GM12878 (cell line): ENCODE measurements at regions of chr10 and their contacts with region 1.

Region 1: DNA sequence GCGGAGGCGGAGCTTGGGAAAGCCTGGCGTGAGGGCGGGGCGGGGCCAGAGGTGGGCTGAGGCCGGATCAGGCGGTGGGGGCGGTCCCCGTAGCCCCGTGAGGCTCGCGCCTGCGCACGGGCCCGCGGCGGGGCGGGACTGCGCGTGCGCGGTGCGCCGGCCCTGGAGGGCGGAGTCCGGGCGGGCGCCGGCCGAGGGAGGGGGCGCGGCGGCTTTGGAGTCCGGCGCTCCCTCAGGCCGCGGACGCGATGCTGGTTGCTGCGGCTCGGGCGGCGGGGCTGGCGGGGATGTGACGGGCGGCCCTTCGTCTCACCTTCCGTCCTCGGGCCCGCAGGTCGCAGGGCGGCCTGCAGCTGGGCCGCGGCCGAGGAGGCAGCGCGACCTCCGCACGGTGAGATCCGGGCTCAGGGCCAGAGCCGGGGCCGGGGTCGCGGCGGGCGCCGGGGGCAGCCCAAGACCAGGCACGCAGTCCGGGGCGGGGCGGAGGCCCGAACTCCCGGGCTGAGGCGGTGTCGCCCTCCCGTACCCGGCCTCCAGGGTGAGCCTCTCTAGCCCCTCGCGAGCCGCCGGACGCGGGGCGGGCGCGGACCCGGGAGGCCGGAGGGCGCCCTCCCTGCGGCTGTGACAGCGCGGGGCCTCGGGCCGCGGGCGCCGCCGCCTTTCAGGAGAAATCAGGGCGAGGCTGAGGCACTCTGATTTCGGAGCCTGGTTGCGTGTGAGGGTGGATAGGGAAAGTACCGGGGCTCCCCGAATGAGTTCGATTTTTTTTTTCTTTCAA is at the start of gene CCSER2:
- DNase-seq: no peak
- ATAC-seq: peak; percentile 74
- H3K4me3 ChIP-seq: peak within 1 kb of the TSS; percentile 75
- H3K27ac ChIP-seq: peak within 1 kb of the TSS; percentile 69
- H3K4me1 ChIP-seq: peaks cover 14% of the 10 kb centered on the region
- H3K27me3 ChIP-seq: no peaks in the 10 kb centered on the region; a peak in 1 of 4 replicates
- CTCF ChIP-seq: no peak
- EP300 ChIP-seq: no peak
- POLR2A ChIP-seq: peak; percentile 87
- RAD21 ChIP-seq: no peak
- polyA plus RNA-seq, gene CCSER2: 4.7 to 6.8 TPM

Region 2: GRCh38 chr10:84139126-84140035 is 189.2 kb before region 1 on chr10 and contains the start of gene GHITM:
- CTCF ChIA-PET with region 1: no interaction called
- POLR2A ChIA-PET with region 1: no interaction called
- RAD21 ChIA-PET with region 1: no interaction called
- SMC1A ChIA-PET with region 1: no interaction called
- in situ Hi-C with region 1: loop called (anchors 5 kb)
- intact Hi-C with region 1: no loop called
- DNase-seq: peak; percentile 92
- ATAC-seq: peak; percentile 98
- H3K4me3 ChIP-seq: peak within 1 kb of the TSS; percentile 84
- H3K27ac ChIP-seq: peak within 1 kb of the TSS; percentile 88
- H3K4me1 ChIP-seq: no peaks in the 10 kb centered on the region
- H3K27me3 ChIP-seq: no peaks in the 10 kb centered on the region
- CTCF ChIP-seq: peak; percentile 21 to 39 (median 29); a peak in 4 of 6 replicates
- EP300 ChIP-seq: peak; percentile 19 to 34; a peak in 1 of 4 replicates
- POLR2A ChIP-seq: peak; percentile 93
- RAD21 ChIP-seq: no peak
- polyA plus RNA-seq, gene GHITM: 366 to 501 TPM

Region 3: DNA sequence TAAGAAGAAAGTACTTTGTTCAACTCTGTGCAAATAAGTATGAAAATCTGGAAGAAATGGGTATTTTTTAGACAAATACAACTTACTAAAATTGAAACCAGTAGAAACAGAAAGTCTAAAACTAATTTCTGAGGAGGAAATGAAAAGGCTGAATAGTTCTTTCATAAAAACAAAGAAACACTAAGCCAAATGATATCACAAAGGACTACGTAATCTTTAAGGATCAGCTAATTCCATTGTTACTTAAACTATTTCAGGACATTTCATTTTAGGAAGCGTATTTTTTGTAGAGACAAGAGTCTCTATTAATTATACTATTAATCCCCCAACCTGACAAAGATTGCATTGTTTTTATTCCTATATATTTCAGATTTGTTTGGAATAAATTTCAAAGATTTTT is 11.4 kb before region 1 on chr10:
- CTCF ChIA-PET with region 1: interaction called, 4 read pairs
- POLR2A ChIA-PET with region 1: interaction called, 4 read pairs
- RAD21 ChIA-PET with region 1: interaction called, 10 read pairs
- SMC1A ChIA-PET with region 1: interaction called, 14 read pairs
- in situ Hi-C with region 1: no loop called
- intact Hi-C with region 1: no loop called
- DNase-seq: no peak
- ATAC-seq: peak; percentile 93
- H3K4me3 ChIP-seq: no peak overlapping the region; the same call in 1 of the 2 replicates
- H3K27ac ChIP-seq: no peak overlapping the region
- H3K4me1 ChIP-seq: peaks cover 4% of the 10 kb centered on the region
- H3K27me3 ChIP-seq: no peaks in the 10 kb centered on the region
- CTCF ChIP-seq: no peak
- EP300 ChIP-seq: peak; percentile 44 to 72; a peak in 3 of 4 replicates
- POLR2A ChIP-seq: no peak
- RAD21 ChIP-seq: no peak